A549 (cell line): ENCODE measurements at regions of chr7 and their contacts with region 1.

Region 1: GRCh38 chr7:149392450-149392849 is 68.4 kb downstream of the ZNF777 start:
- DNase-seq: no peak
- ATAC-seq: no peak
- H3K4me3 ChIP-seq: no peak overlapping the region
- H3K27ac ChIP-seq: no peak overlapping the region
- H3K4me1 ChIP-seq: no peaks in the 10 kb centered on the region
- CTCF ChIP-seq: no peak
- EP300 ChIP-seq: no peak
- POLR2A ChIP-seq: no peak
- RAD21 ChIP-seq: no peak

Region 2: DNA sequence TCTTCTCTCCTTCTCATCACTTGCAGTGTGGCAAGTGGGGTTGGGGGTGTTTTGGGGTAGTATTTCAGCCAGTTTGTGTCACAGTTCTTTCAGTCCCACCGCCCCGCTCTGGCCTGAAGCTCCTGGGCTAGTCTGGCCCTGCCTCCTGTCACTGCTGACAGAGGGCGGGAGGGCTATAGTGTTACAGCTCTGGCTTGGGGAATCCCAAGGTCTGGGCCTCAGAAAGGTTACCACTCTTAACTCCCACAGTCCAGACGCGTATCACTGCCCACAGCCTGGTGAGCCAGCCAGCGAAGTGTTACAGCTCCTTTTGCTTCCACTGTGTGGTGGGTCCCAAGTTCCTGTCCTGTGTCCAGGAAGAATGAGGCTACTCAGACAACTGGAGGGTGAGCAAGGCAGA is 12.4 kb after region 1 on chr7:
- CTCF ChIA-PET with region 1: interaction called, 14 read pairs
- POLR2A ChIA-PET with region 1: no interaction called
- DNase-seq: no peak
- ATAC-seq: peak in 1 of 2 experiments; percentile 33; a peak in 2 of 6 replicates
- H3K4me3 ChIP-seq: no peak overlapping the region
- H3K27ac ChIP-seq: no peak overlapping the region
- H3K4me1 ChIP-seq: no peaks in the 10 kb centered on the region
- CTCF ChIP-seq: no peak
- EP300 ChIP-seq: no peak
- POLR2A ChIP-seq: no peak
- RAD21 ChIP-seq: no peak

Region 3: DNA sequence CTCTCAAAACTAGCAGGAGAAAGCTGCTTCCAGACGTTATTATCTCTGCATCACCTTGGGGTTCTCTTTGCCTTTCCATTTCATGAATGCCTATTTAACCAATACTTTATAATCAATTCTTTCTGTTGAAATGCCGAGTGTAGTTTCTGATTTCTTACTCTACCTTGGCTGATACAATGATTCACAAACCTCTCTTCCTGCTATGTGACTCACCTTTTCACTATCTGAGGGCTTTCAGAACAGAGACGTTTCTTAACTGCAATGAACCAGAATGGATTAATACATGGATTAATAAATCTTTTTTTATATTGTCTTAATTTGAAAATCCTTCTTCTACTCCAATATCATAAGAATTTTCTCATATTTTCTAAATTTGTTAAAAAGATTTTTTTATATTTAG is 151.6 kb after region 1 on chr7:
- CTCF ChIA-PET with region 1: no interaction called
- POLR2A ChIA-PET with region 1: no interaction called
- DNase-seq: no peak
- ATAC-seq: no peak
- H3K4me3 ChIP-seq: no peak overlapping the region
- H3K27ac ChIP-seq: no peak overlapping the region
- H3K4me1 ChIP-seq: no peaks in the 10 kb centered on the region
- CTCF ChIP-seq: no peak
- EP300 ChIP-seq: no peak
- POLR2A ChIP-seq: no peak
- RAD21 ChIP-seq: no peak